ENCODE measurements at regions of chr22 and their contacts with region 1.

Region 1: GRCh38 chr22:42437488-42438292 is 5.5 kb upstream of the NFAM1 start:
- DNase-seq: peak; percentile 83
- CTCF ChIP-seq: peak; percentile 94

Region 2: DNA sequence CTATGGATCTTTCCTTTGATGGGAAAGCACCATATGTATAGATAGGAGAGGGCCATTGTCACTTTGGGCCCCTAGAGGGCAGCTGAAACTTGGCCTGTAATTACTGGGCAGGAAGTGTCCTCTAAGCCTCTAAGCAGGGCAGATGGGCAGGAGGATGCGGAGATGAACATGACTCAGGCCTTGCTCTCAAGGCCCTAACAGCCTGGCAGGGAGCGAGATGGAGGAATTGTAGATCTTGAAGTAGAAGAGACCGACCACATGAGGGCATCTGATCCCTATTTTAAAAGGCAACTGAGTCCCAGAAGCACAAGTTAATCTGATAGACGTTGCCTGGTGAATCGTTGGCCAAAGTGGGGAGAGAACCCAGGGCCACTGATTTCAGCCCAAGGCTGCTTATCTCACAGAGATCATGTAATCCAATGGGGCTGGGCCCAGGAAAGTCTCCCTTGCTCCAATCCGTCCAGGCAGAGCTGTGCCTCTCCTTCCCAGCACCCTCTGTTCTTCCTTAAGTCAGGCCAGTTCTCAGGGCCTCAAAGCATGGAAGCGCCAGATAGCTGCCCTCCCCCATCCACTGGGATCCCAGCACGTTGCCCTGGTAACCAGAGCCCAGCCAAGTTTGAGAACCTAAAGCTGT is 471.0 kb before region 1 on chr22:
- in situ Hi-C with region 1: loop called (anchors 25 kb)
- DNase-seq: peak; percentile 74
- CTCF ChIP-seq: peak; percentile 63

Region 3: GRCh38 chr22:42179616-42180015 is 258.1 kb before region 1 on chr22:
- in situ Hi-C with region 1: loop called (anchors 10 kb)
- DNase-seq: no peak
- CTCF ChIP-seq: no peak

Region 4: DNA sequence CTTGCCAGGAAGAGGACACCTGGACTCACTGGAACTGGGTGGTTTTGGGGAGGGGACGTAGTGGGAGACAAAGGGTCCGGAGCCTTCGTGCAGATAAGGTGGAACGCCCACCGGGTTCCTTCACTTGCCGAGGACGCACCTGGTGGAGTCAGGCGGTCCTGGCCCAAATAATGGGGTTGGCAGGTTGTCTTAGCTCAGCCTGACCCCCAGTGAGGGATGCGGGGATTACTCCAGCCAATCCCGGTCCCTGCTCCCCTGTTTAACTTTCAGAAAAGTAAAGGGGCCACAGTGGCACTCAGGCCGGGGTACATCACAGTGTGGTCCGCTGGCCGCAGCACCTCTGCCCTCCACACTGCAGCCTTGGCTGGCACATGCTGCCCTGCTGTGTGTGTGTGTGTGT is 265.0 kb after region 1 on chr22:
- in situ Hi-C with region 1: no loop called
- DNase-seq: no peak
- CTCF ChIP-seq: no peak

Region 5: DNA sequence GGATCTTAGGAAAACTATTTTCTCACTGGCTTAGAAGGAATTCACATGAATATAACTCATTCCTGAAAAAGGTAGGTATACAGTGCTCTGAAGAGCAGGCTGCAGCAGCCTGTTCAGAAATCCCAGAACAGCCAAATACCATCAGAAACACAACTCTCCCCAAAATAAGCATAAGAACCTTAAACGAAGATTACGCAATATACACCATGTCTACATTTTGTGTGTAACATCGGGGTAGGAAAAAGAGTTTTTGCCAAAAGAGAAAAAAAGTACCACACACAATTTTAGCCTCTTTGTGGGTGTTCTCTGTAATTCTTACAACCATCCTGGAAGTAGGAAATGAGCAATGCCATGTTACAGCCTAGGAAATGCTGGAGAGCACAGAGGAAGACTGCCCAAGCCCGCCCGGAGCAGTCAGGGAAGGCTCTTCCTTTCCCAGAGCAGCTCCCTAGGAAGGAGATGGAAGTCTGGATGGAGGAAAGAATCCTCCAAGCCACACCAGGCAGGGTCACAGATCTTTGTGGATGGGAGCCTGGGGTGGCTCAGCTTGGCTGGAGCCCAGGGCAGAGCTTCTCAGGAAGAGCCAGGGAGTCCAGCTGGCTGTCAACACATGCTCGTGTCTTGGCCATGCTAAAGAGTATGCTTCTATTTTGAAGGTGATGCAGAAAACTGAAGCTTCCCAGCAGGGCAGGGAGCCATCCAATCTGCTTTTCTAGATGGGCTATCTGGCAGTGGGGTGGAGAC is 469.1 kb after region 1 on chr22:
- in situ Hi-C with region 1: no loop called
- DNase-seq: no peak
- CTCF ChIP-seq: no peak